ENCODE measurements at regions of chr19 and their contacts with region 1.

Region 1: GRCh38 chr19:49614096-49614833 is 23.3 kb downstream of the PRR12 start:
- DNase-seq: peak; percentile 91
- ATAC-seq: peak; percentile 91
- H3K4me3 ChIP-seq: no peak overlapping the region
- H3K27ac ChIP-seq: peak overlapping the region; percentile 45
- H3K4me1 ChIP-seq: peaks cover 16% of the 10 kb centered on the region
- H3K27me3 ChIP-seq: no peaks in the 10 kb centered on the region
- CTCF ChIP-seq: peak; percentile 27; the same call in 1 of the 2 replicates
- POLR2A ChIP-seq: no peak
- RAD21 ChIP-seq: 0 out of 2 replicates have a peak, but pooled peaks have one; percentile 17

Region 2: GRCh38 chr19:49629659-49630058 is 15.4 kb after region 1 on chr19:
- CTCF ChIA-PET with region 1: no interaction called
- POLR2A ChIA-PET with region 1: interaction called, 10 read pairs
- dilution Hi-C with region 1: no loop called
- in situ Hi-C with region 1: no loop called
- intact Hi-C with region 1: no loop called
- DNase-seq: no peak
- ATAC-seq: no peak
- H3K4me3 ChIP-seq: no peak overlapping the region
- H3K27ac ChIP-seq: no peak overlapping the region
- H3K4me1 ChIP-seq: peaks cover 2% of the 10 kb centered on the region; the same call in 1 of the 2 replicates
- H3K27me3 ChIP-seq: no peaks in the 10 kb centered on the region
- CTCF ChIP-seq: no peak
- POLR2A ChIP-seq: no peak
- RAD21 ChIP-seq: no peak